ENCODE measurements at regions of chr17 and their contacts with region 1.

Region 1: DNA sequence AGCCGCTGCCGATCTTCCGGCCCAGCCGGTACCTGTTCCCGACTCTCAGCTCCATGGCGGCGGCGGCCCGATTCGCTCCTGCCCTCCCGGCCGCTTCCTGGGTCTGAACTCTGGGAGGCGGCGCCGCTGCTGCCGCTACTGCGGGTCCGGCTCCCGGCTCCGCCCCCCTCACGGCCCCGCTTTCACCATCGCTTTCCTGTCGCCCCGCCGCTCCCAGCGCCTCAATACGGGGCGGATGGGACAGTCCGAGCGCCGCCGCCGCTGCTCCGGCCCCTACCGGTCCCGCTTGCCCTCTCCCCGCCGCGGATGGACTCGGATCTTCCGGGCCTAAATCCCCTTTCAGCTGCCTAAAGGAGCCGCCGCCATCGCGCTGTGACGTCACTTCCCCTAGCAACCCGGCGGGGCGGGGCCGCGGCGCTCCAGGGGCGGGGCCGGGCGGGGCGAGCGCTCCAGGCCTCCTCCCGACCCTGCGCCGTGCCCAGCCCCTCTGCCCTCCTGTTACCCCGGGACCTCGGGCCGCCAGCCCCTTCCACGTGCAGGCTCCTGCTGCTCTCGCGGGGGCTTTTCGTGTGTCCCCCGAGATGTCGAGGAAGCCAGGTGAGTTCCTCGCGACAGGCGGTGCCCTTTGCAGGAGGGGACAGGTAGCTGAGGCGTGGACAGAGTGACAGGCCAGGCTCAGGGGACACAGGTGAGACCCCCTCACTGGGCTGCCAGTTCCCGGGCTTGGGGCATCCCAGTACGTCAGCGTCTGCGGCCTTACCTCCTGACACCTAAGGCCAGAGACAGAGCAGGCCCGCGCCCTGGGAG is at the start of gene CSNK1D:
- DNase-seq: peak; percentile 100
- H3K4me3 ChIP-seq: peak within 1 kb of the TSS; percentile 81 to 91
- H3K27ac ChIP-seq: peak within 1 kb of the TSS; percentile 90 to 94
- H3K4me1 ChIP-seq: peaks cover 29 to 44% of the 10 kb centered on the region in 2 experiments
- H3K27me3 ChIP-seq: no peaks in the 10 kb centered on the region
- CTCF ChIP-seq: no peak
- EP300 ChIP-seq: peak in 1 of 2 experiments; percentile 85; a peak in 1 of 4 replicates
- RAD21 ChIP-seq: no peak
- polyA plus RNA-seq, gene CSNK1D: 133 and 216 TPM in 2 replicates

Region 2: DNA sequence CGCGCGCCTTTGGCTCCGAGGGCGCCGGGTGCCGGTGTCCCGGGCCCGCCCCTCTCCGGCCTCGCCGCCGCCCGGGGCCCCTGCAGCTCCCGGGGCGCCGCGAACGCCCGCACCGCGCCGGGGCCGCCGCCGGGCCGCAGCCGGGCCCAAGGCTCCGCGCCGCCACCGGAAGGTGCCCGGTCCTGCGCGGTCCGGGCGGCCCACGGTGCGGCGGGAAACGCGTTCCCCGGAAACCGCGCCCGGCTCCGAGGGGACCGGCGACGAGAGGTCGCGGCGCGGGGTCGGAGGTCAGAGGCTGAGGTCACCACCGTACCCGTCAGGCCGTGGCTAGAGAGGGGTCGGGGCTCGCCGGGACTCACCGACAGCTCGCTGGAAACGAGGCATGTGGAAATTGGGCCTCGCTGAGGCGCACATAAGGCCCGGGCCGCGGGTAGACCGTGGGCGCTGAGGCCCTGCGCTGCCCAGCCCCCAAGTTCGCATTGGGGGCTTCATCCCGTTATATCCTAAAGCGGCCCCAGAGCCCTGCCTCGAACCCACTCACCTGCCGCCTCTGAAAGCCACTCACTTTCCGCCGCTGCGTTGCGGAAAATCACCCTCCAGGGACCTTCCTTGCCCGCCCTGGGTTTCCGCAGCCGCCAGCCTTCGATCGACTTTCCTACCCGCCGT is 207.8 kb before region 1 on chr17 and contains the start of gene DUS1L:
- CTCF ChIA-PET with region 1: no interaction called
- POLR2A ChIA-PET with region 1: no interaction called
- DNase-seq: peak; percentile 98
- H3K4me3 ChIP-seq: peak within 1 kb of the TSS; percentile 81 to 95
- H3K27ac ChIP-seq: peak within 1 kb of the TSS in 1 of 2 experiments; percentile 51; a peak in 1 of 4 replicates
- H3K4me1 ChIP-seq: peaks cover 12 to 21% of the 10 kb centered on the region in 2 experiments; a peak in 2 of 4 replicates
- H3K27me3 ChIP-seq: no peaks in the 10 kb centered on the region
- CTCF ChIP-seq: no peak
- EP300 ChIP-seq: no peak
- RAD21 ChIP-seq: no peak
- polyA plus RNA-seq, gene DUS1L: 144 and 163 TPM in 2 replicates

Region 3: DNA sequence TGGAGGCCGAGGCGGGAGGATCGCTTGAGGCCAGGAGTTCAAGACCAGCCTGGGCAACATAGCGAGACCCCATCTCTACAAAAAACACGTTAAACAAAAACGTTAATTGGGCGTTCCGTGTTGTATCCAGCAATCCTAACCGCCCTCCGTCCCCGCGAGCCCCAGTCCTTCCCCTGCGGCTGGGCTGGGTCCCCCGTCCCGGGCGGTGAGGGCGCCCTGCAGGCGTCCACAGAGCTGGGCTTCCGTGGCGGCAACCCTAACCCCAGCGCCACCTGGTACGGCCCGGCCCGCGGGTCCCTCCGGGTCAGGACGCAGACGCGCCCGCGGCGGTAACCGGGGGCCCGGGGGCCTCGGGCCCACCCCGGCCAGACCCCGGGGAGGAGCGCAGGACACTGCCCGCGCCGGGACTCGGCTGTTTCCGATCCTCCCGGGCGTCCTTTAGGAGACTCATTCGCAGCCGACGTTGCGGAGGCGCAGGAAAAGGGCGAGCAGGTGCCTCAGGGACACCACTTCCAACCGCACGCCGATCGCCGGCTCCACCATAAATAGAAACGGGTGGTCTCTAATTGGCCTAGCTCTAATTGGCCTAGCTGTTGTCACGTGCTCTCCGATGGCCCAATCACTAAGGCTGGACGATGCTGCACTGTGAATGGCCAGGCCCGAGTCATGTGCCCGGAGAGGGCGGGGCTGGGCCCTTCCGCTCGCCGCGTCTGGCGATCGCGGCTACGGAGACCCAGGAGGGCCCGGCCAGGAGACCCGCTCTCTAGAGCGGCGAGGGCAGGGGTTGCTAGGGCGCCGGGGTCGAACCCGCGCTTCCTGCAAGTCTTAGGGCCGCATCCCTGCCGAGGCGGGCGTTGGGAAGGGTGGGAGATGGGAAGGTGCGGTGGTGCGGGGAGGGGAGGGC is 19.0 kb after region 1 on chr17:
- CTCF ChIA-PET with region 1: interaction called, 4 read pairs
- POLR2A ChIA-PET with region 1: interaction called, 21 read pairs
- DNase-seq: peak; percentile 100
- H3K4me3 ChIP-seq: peak overlapping the region; percentile 75 to 95
- H3K27ac ChIP-seq: peak overlapping the region; percentile 78 to 95
- H3K4me1 ChIP-seq: peaks cover 20 to 21% of the 10 kb centered on the region in 2 experiments; a peak in 3 of 4 replicates
- H3K27me3 ChIP-seq: no peaks in the 10 kb centered on the region
- CTCF ChIP-seq: no peak
- EP300 ChIP-seq: peak in 1 of 2 experiments; percentile 38; a peak in 1 of 4 replicates
- RAD21 ChIP-seq: 0 out of 2 replicates have a peak, but pooled peaks have one; percentile 9